Right ventricle myocardium inferior (tissue), 1 donor: ENCODE measurements at regions of chr2 and their contacts with region 1.

Region 1: DNA sequence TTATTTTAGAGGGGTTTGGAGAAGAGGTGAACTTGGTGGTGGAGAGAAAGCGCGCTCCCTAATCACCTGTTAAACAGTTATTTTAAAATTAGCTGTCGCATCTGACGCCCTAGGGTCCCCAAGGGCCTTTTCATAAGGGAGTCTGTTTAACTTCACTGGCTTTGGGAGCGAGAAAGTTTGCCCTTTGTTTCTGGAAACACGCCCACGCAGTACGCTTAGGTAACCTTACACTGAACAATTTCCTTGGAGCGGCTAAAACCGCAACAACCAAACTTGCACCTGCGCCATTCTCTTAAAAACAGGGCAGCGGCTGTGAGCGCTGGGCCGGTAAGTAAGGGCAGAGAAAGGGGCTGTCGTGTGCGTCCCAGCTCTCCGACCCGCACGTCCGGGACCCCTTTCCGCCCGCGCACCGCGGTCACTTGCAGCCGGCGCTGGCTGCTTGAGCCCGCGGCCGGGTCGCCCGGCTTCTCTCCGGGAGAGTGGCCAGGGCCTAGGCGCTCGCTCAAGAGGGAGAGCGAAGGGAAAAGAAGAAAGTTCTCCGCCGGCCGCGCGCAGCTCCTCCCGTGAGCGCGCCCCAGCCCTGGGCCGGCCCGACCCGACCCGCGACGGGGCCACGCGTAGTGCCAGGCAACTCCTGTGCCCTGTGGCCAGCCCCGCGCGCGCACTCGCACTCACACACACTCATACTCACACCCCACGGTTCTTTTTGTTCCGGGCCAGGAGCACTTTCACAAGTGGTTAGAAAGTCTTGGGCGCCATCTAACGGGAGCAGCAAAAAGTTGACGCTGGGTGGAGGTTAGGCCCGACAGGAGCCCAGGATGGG is 19.2 kb downstream of the POU3F3 start:
- DNase-seq: no peak
- ATAC-seq: peak; percentile 85

Region 2: GRCh38 chr2:104033399-104033798 is 839.7 kb before region 1 on chr2:
- intact Hi-C with region 1: loop called (anchors 10 kb)
- DNase-seq: no peak
- ATAC-seq: no peak

Region 3: DNA sequence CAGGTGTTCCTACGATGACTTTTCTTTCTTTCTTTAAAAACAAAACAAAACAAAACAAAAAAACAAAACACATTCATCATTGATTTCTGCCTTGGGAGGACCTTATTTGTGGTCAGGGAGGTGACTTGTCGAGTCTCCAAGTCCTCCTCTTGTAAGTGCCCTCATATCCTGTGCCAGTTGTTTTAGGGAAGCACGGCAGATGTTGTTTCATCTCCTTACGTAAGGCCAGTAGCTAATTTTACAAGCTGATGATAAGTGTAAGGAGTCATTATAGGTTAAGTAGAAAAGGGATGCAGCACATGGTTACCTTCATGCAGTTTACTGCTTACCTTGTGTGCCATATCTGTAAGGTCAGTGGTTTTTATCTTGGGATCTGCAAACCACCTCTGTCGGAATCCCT is 217.0 kb after region 1 on chr2:
- intact Hi-C with region 1: no loop called
- DNase-seq: no peak
- ATAC-seq: no peak

Region 4: GRCh38 chr2:105718846-105719481 is 845.9 kb after region 1 on chr2:
- intact Hi-C with region 1: no loop called
- DNase-seq: no peak
- ATAC-seq: no peak